MCF 10A (cell line): ENCODE measurements at regions of chr2 and their contacts with region 1.

Region 1: DNA sequence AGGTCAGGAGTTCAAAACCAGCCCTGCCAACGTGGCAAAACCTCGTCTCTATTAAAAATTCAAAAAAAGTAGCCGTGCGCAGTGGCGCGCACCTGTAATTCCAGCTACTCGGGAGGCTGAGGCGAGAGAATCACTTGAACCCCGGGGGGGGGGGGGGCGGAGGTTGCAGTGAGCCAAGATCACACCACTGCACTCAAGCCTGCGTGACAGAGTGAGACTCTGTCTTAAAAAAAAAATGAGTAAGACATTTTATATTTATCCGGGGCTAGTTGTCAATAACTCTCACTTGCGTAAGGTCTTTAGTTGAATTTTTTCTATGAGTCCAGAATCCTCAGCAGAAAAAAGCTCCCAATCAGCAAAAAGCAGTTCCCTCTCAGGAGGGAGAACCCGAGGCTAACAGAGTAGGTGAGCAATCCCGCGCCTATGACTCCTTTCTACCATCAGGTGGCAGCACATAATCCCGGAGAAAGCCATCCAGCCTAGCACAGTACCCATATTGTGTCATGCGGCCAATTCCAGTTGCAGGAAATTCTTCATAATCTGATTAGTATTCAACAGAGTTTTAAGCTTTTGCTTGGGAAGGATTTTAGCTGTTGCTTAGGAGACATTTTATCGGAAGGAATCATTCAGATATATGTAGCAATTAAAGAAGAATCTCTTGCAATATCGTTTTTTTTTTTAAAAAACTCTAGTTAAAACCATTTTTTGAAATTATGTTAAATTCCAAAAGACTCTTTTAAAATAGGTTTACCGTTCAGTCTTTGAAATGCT is 11.9 kb upstream of the CRYGA start:
- DNase-seq: peak; percentile 84
- H3K4me3 Mint-ChIP-seq: no peak overlapping the region
- H3K27ac Mint-ChIP-seq: no peak overlapping the region
- H3K4me1 Mint-ChIP-seq: no peaks in the 10 kb centered on the region
- H3K27me3 Mint-ChIP-seq: peaks cover 5% of the 10 kb centered on the region
- CTCF ChIP-seq: peak; percentile 73

Region 2: GRCh38 chr2:208101716-208102631 is 73.3 kb before region 1 on chr2:
- CTCF ChIA-PET with region 1: interaction called, 12 read pairs
- POLR2A ChIA-PET with region 1: interaction called, 6 read pairs
- intact Hi-C with region 1: loop called (anchors 2 kb)
- DNase-seq: peak; percentile 37
- H3K4me3 Mint-ChIP-seq: no peak overlapping the region
- H3K27ac Mint-ChIP-seq: no peak overlapping the region
- H3K4me1 Mint-ChIP-seq: peaks cover 4% of the 10 kb centered on the region
- H3K27me3 Mint-ChIP-seq: no peaks in the 10 kb centered on the region
- CTCF ChIP-seq: peak; percentile 30

Region 3: GRCh38 chr2:208153156-208153555 is 22.1 kb before region 1 on chr2:
- CTCF ChIA-PET with region 1: interaction called, 16 read pairs
- POLR2A ChIA-PET with region 1: no interaction called
- intact Hi-C with region 1: no loop called
- DNase-seq: no peak
- H3K4me3 Mint-ChIP-seq: no peak overlapping the region
- H3K27ac Mint-ChIP-seq: no peak overlapping the region
- H3K4me1 Mint-ChIP-seq: no peaks in the 10 kb centered on the region
- H3K27me3 Mint-ChIP-seq: no peaks in the 10 kb centered on the region
- CTCF ChIP-seq: no peak

Region 4: GRCh38 chr2:208186465-208186864 is 11.2 kb after region 1 on chr2:
- CTCF ChIA-PET with region 1: interaction called, 25 read pairs
- POLR2A ChIA-PET with region 1: no interaction called
- intact Hi-C with region 1: no loop called
- DNase-seq: no peak
- H3K4me3 Mint-ChIP-seq: no peak overlapping the region
- H3K27ac Mint-ChIP-seq: no peak overlapping the region
- H3K4me1 Mint-ChIP-seq: no peaks in the 10 kb centered on the region
- H3K27me3 Mint-ChIP-seq: peaks cover 8% of the 10 kb centered on the region
- CTCF ChIP-seq: no peak

Region 5: DNA sequence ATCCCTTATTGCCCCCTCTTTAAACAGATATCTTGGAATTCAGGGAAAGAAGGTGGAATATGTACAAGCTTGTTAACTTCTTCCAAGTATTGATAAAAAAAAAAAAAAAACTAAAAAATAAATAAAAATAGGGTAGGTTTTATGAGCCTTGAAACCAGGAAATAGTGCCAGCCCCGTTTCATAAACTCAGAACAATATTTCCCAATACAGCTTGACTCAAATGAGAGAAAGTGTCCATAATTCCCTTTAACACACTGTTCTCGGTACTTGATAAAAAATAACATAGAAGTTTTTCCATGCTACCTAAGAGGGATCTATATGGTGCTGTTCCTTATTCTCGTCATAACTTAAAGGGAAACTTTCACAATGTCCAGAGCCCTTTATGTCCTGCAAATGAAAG is 32.5 kb after region 1 on chr2:
- CTCF ChIA-PET with region 1: interaction called, 19 read pairs
- POLR2A ChIA-PET with region 1: interaction called, 3 read pairs
- intact Hi-C with region 1: no loop called
- DNase-seq: no peak
- H3K4me3 Mint-ChIP-seq: no peak overlapping the region
- H3K27ac Mint-ChIP-seq: no peak overlapping the region
- H3K4me1 Mint-ChIP-seq: no peaks in the 10 kb centered on the region
- H3K27me3 Mint-ChIP-seq: no peaks in the 10 kb centered on the region
- CTCF ChIP-seq: no peak

Region 6: DNA sequence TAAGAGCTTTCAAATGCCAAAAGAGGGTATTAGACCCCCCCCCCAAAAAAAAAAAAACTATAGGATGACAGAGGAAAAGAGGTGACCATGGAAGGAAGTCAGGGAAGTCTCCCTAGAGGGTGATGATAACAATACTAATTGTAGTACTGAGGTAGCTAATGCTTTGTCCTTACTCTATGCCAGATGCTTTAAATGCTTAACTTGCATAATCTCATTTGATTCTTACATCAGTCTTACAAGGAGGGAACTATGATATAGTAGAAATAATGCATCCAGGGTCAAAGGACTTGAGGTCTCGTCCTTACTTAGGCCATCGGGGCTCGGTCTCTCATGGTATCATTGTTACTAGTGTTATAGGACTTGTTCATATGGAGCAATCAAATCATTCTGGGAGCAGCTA is 70.5 kb after region 1 on chr2:
- CTCF ChIA-PET with region 1: interaction called, 104 read pairs
- POLR2A ChIA-PET with region 1: interaction called, 6 read pairs
- intact Hi-C with region 1: no loop called
- DNase-seq: no peak
- H3K4me3 Mint-ChIP-seq: no peak overlapping the region
- H3K27ac Mint-ChIP-seq: no peak overlapping the region
- H3K4me1 Mint-ChIP-seq: peaks cover 15% of the 10 kb centered on the region
- H3K27me3 Mint-ChIP-seq: no peaks in the 10 kb centered on the region
- CTCF ChIP-seq: no peak

Region 7: GRCh38 chr2:208265801-208266552 is 90.7 kb after region 1 on chr2 and contains the start of gene PIKFYVE:
- CTCF ChIA-PET with region 1: interaction called, 38 read pairs
- POLR2A ChIA-PET with region 1: interaction called, 20 read pairs
- intact Hi-C with region 1: no loop called
- DNase-seq: peak; percentile 98
- H3K4me3 Mint-ChIP-seq: peak within 1 kb of the TSS; percentile 90
- H3K27ac Mint-ChIP-seq: peak within 1 kb of the TSS; percentile 96
- H3K4me1 Mint-ChIP-seq: peaks cover 27% of the 10 kb centered on the region
- H3K27me3 Mint-ChIP-seq: no peaks in the 10 kb centered on the region
- CTCF ChIP-seq: no peak
- total RNA-seq, gene PIKFYVE: 22.8 and 27.2 TPM in 2 replicates